WTC11 (cell line): ENCODE measurements at regions of chr7 and their contacts with region 1.

Region 1: GRCh38 chr7:141533149-141533949 is 17.9 kb upstream of the AGK start:
- DNase-seq: peak; percentile 74
- ATAC-seq: peak; percentile 87
- H3K4me3 Mint-ChIP-seq: no peak overlapping the region
- H3K27ac Mint-ChIP-seq: peak overlapping the region; percentile 81
- H3K4me1 Mint-ChIP-seq: peaks cover 20% of the 10 kb centered on the region
- H3K27me3 Mint-ChIP-seq: no peaks in the 10 kb centered on the region
- CTCF ChIP-seq: peak; percentile 88

Region 2: GRCh38 chr7:141238596-141239243 is 294.6 kb before region 1 on chr7:
- CTCF ChIA-PET with region 1: interaction called, 16 read pairs
- POLR2A ChIA-PET with region 1: no interaction called
- DNase-seq: no peak
- ATAC-seq: peak; percentile 67
- H3K4me3 Mint-ChIP-seq: no peak overlapping the region
- H3K27ac Mint-ChIP-seq: peak overlapping the region; percentile 24; the same call in 1 of the 2 replicates
- H3K4me1 Mint-ChIP-seq: peaks cover 42% of the 10 kb centered on the region
- H3K27me3 Mint-ChIP-seq: no peaks in the 10 kb centered on the region
- CTCF ChIP-seq: no peak

Region 3: GRCh38 chr7:141262101-141263090 is 271.0 kb before region 1 on chr7:
- CTCF ChIA-PET with region 1: interaction called, 11 read pairs
- POLR2A ChIA-PET with region 1: no interaction called
- DNase-seq: no peak
- ATAC-seq: no peak; the same call in 1 of the 2 replicates
- H3K4me3 Mint-ChIP-seq: no peak overlapping the region
- H3K27ac Mint-ChIP-seq: no peak overlapping the region
- H3K4me1 Mint-ChIP-seq: peaks cover 5% of the 10 kb centered on the region
- H3K27me3 Mint-ChIP-seq: no peaks in the 10 kb centered on the region
- CTCF ChIP-seq: 0 out of 2 replicates have a peak, but pooled peaks have one; percentile 35

Region 4: DNA sequence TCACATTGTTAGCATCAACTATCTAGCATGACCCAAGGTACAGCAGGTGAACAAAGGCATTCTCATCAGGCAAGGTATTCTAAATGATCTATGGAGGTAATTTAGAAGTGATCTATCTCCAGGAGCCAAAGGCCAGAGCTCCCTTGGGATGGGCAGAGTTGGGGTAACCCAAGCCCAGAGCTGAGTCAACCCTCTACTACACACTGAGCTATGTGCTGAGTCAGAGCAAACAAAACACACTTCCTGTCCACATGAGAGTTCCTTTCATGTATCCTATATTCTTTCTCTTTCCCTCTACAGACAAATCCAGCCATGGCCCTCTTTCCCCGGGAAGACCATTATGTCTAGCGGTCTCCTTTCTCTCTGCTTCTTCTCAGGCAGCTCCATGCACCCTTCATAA is 50.3 kb before region 1 on chr7:
- CTCF ChIA-PET with region 1: interaction called, 12 read pairs
- POLR2A ChIA-PET with region 1: no interaction called
- DNase-seq: no peak
- ATAC-seq: no peak
- H3K4me3 Mint-ChIP-seq: no peak overlapping the region
- H3K27ac Mint-ChIP-seq: no peak overlapping the region
- H3K4me1 Mint-ChIP-seq: peaks cover 18% of the 10 kb centered on the region
- H3K27me3 Mint-ChIP-seq: no peaks in the 10 kb centered on the region
- CTCF ChIP-seq: no peak

Region 5: DNA sequence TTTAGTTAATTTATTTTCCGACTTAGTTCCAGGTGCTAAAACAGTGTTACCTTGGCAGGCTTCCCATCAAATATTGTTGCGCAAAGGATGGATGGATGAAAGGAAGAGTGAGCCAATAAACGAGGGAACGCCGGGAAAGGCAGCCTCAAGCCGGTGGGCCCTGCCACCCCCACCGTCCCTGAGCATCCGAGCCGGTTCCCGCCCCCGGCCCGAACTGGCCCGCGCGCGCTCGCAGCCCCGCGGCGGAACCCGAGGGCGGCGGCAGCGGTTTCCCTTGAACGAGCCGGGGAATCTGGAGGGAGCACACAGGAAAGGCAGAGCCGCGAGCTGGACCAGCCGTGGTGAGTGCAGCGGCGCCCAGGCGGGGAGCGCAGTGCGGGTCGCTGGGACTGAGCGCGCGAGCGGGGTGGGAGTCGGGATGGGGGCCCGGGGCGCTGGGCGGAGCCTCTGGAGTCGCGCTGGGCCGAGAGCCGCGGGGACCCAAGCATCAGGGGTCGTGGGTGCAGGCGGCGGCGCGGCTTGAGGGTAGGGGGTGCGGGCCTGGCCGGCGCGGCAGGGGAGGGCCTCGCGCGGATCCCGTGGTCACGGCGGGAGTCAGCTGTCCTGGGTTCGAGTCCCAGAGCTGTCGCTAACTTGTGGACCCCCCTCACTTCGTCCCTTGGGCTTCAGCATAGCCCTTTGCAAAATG is 17.9 kb after region 1 on chr7 and contains the start of gene AGK:
- CTCF ChIA-PET with region 1: interaction called, 12 read pairs
- POLR2A ChIA-PET with region 1: no interaction called
- DNase-seq: peak; percentile 82
- ATAC-seq: peak; percentile 95
- H3K4me3 Mint-ChIP-seq: peak within 1 kb of the TSS; percentile 84
- H3K27ac Mint-ChIP-seq: peak within 1 kb of the TSS; percentile 56
- H3K4me1 Mint-ChIP-seq: peaks cover 28% of the 10 kb centered on the region
- H3K27me3 Mint-ChIP-seq: no peaks in the 10 kb centered on the region
- CTCF ChIP-seq: no peak
- total RNA-seq, gene AGK: 32.2 to 43.0 TPM (median 37.4 TPM) in 3 replicates

Region 6: GRCh38 chr7:141563956-141564631 is 30.7 kb after region 1 on chr7:
- CTCF ChIA-PET with region 1: no interaction called
- POLR2A ChIA-PET with region 1: no interaction called
- DNase-seq: peak; percentile 23
- ATAC-seq: peak; percentile 94
- H3K4me3 Mint-ChIP-seq: no peak overlapping the region
- H3K27ac Mint-ChIP-seq: peak overlapping the region; percentile 12
- H3K4me1 Mint-ChIP-seq: peaks cover 29% of the 10 kb centered on the region
- H3K27me3 Mint-ChIP-seq: no peaks in the 10 kb centered on the region
- CTCF ChIP-seq: no peak

Region 7: DNA sequence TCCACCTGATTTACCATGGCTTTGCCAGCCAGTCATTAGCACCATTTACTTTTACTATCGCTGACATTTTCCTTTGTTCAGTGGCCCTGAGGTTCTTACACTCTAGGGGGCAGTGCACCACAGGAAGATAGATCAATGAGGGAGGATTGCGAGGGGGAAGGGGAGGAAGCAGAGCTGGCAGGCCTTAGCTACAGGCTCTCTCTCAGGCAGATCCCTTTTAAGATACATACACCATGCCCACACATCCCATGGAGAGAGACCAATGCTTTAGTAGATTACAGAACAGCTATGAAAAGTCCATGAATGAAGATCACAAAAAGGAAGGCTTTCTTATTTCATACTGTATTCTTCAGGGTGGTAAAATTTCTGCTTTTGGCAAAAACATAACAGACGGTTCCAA is 121.2 kb after region 1 on chr7:
- CTCF ChIA-PET with region 1: interaction called, 26 read pairs
- POLR2A ChIA-PET with region 1: no interaction called
- DNase-seq: peak; percentile 57
- ATAC-seq: peak; percentile 82
- H3K4me3 Mint-ChIP-seq: no peak overlapping the region
- H3K27ac Mint-ChIP-seq: peak overlapping the region; percentile 48; the same call in 1 of the 2 replicates
- H3K4me1 Mint-ChIP-seq: peaks cover 28% of the 10 kb centered on the region
- H3K27me3 Mint-ChIP-seq: no peaks in the 10 kb centered on the region
- CTCF ChIP-seq: peak; percentile 29; the same call in 1 of the 2 replicates